Activated CD8-positive, alpha-beta memory T cell treated with anti-CD3 and anti-CD28 coated beads, Interleukin-2, amount 10 ng/mL, durations not matched to agents 7 days and 5 days (primary cell): ENCODE measurements at regions of chr4 and their contacts with region 1.

Region 1: DNA sequence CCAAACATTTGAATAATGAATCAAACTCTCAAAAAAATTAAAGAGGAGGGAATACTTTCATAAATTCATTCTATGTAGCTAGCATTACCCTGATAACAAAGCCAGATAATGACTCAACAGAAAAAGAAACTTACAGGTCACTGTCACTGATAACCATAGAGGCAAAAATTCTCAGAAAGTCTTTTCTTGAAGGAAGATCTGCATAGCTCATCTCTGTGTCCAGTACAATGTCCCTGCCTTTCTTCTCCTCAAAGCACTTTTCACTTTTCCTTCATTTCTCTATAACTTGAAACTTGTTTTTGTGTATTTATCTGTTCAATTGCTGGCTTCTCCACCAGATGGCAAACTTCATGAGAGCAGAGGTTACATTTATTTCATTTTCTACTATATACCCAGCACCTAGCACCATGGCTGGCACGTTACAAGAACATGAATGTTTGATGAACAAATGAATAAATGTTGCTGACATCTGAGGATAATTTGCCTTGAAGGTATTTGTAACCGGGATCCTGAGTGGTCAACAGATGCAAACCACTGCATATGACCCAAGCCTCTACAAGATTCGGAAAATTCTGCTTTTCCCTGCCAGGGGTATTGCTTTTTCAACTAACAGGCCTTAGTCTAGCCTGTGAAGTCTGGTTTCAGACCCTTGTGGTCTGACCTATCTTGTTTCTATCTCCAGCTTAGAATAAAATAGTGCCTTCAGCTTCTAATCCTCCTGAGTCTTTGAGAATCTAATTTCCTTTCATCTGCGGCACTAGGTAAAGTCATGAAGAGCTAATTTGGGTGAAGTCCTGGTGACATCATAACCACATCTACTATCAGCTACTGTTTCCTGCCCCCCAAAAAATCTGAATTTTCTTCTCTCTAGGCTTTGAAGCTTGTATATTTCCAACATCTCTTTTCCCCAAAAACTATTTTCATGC is 52.5 kb upstream of the ANTXR2 start:
- DNase-seq: peak; percentile 67
- ATAC-seq: peak; percentile 83
- H3K4me3 Mint-ChIP-seq: peak overlapping the region; percentile 33
- H3K27ac Mint-ChIP-seq: peak overlapping the region; percentile 95
- H3K4me1 Mint-ChIP-seq: peaks cover 66% of the 10 kb centered on the region
- H3K27me3 Mint-ChIP-seq: no peaks in the 10 kb centered on the region

Region 2: DNA sequence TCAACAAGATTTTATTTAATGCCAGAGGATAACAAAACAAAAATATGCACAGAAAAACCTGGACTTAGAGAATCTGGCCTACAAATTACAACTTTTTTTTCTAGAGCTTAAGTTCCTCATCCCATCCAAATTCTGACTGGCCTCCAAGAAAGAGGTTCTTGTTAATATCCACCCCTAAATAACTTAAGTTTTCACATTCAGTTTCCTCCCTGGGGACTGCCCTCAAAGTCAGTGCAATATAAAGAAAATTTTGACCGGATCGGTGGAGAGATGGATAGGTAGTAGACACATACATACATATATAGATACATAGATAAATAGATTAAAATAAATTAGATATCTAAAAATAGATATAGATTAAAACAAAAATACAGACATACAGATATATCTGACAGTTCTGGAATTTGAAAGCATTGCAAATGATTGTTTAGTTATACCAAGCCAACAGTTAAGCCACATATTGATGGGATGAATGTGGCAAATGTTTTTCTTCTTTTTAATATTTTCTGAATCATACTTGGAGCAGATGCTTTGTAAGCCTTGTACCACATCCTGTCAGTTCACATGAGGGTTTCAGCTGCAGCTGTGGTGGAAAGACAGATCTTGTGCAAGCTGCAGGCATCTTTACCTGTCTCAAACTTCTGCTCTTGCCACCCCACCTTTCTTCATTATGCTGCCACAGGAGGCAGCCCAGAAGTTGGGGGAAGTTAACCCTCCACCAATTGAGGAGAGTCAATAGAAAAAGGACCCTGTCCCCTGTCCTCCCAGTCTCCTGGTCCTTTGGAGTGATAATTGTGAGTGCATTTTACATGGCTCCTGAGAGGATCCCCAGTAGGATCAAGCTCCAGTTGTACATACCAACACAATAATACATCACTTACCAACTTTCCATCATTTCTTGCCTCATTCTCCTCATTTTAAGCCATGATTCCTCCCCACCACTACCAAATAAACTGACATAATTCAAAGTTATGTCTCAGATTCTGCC is 13.3 kb after region 1 on chr4:
- CTCF ChIA-PET with region 1: interaction called, 65 read pairs
- DNase-seq: peak; percentile 88
- ATAC-seq: peak; percentile 95
- H3K4me3 Mint-ChIP-seq: peak overlapping the region; percentile 33
- H3K27ac Mint-ChIP-seq: peak overlapping the region; percentile 87
- H3K4me1 Mint-ChIP-seq: peaks cover 60% of the 10 kb centered on the region
- H3K27me3 Mint-ChIP-seq: no peaks in the 10 kb centered on the region

Region 3: GRCh38 chr4:80173401-80173800 is 47.9 kb after region 1 on chr4:
- CTCF ChIA-PET with region 1: interaction called, 38 read pairs
- DNase-seq: peak; percentile 83
- ATAC-seq: peak; percentile 90
- H3K4me3 Mint-ChIP-seq: peak overlapping the region; percentile 26
- H3K27ac Mint-ChIP-seq: peak overlapping the region; percentile 94
- H3K4me1 Mint-ChIP-seq: peaks cover 56% of the 10 kb centered on the region
- H3K27me3 Mint-ChIP-seq: no peaks in the 10 kb centered on the region